PC-9 (cell line): ENCODE measurements at regions of chr11 and their contacts with region 1.

Region 1: GRCh38 chr11:14892036-14892567 is at the start of gene CYP2R1:
- DNase-seq: peak; percentile 90 to 91
- H3K4me3 ChIP-seq: peak within 1 kb of the TSS; percentile 97
- H3K27ac ChIP-seq: peak within 1 kb of the TSS; percentile 79
- H3K4me1 ChIP-seq: peaks cover 10% of the 10 kb centered on the region
- H3K27me3 ChIP-seq: no peaks in the 10 kb centered on the region
- CTCF ChIP-seq: no peak
- total RNA-seq, gene CYP2R1: 7.1 and 7.2 TPM in 2 replicates

Region 2: DNA sequence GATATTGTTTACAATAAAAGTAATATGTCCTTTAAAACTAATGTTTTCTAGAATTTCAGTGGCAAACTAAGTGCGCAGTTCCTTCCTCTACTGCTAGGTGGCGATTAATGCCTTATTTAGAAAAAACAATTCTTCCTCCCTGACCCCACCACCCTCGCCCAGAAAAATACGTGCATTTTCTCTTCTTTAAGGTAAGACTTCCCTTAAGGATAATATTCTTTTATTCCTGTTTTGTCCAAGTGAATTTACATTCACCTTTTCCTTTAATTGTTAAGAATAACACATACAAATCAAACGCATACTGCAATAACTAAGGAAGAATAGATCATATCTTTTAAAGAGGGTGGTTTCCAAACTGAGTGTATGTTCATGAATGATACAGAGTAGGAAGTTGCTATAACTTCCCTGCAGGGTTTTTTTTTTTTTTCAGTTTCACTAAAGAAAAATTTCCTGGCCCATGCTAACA is 354.9 kb before region 1 on chr11:
- CTCF ChIA-PET with region 1: no interaction called
- POLR2A ChIA-PET with region 1: no interaction called
- intact Hi-C with region 1: loop called (anchors 1 kb)
- DNase-seq: no peak
- H3K4me3 ChIP-seq: no peak overlapping the region
- H3K27ac ChIP-seq: no peak overlapping the region
- H3K4me1 ChIP-seq: no peaks in the 10 kb centered on the region
- H3K27me3 ChIP-seq: no peaks in the 10 kb centered on the region
- CTCF ChIP-seq: peak; percentile 76

Region 3: GRCh38 chr11:15747671-15748070 is 855.6 kb after region 1 on chr11:
- CTCF ChIA-PET with region 1: no interaction called
- POLR2A ChIA-PET with region 1: interaction called, 10 read pairs
- intact Hi-C with region 1: no loop called
- DNase-seq: no peak
- H3K4me3 ChIP-seq: no peak overlapping the region
- H3K27ac ChIP-seq: no peak overlapping the region
- H3K4me1 ChIP-seq: peaks cover 22% of the 10 kb centered on the region
- H3K27me3 ChIP-seq: no peaks in the 10 kb centered on the region
- CTCF ChIP-seq: no peak